ENCODE measurements at regions of chr12 and their contacts with region 1.

Region 1: GRCh38 chr12:452667-453210 is 7.0 kb upstream of the B4GALNT3 start:
- DNase-seq: peak; percentile 71
- CTCF ChIP-seq: peak; percentile 46

Region 2: DNA sequence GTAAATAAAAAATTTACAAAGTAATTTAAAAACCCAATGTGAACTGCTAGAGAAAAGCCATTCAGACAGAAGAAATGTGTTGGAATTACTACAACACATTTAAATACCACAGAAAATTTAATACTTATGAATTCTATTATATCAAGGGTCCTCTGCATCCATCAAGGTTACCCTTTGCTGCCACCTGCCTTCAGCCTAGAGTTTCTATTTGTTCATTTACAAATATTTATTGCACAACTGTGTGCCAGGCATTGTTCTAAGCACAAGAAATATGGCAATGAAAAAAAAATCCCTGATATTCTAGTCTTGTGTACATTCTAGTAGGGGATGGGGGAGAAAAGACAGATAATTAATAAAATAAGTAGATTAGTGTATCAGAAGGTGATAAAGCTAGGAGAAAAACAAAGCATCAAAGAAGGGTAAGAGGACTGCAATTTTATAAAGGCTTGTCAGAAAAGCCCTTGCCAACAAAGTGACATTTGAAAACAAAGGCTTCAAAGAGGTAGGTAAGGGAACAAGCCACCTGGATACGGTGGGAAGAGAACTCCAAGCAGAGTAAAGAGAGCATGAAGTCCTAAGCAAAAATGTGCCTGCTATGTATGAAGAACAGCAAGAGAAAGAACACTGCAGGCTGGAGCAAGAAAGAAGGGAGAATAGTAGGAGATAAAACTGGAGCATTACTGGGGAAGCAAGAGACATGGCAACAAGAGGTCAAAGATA is 131.0 kb before region 1 on chr12:
- CTCF ChIA-PET with region 1: no interaction called
- POLR2A ChIA-PET with region 1: no interaction called
- DNase-seq: no peak
- CTCF ChIP-seq: no peak

Region 3: DNA sequence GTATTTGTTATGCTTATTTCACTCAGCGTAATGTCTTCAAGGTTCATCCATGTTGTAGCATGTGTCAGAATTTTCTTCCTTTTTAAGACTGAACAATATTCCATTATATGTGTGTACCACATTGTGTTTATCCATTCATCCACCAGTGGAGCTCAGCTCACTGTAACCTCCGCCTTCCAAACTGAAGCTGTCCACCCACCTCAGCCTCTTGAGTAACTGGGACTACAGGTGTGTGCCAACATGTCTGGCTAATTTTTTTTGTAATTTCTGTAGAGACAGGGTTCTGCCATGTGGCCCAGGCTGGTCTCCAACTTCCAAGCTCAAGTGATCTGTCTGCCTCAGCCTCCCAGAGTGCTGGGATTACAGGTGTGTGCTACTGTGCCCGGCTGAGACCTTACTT is 30.2 kb before region 1 on chr12:
- CTCF ChIA-PET with region 1: interaction called, 17 read pairs
- POLR2A ChIA-PET with region 1: no interaction called
- DNase-seq: no peak
- CTCF ChIP-seq: no peak

Region 4: GRCh38 chr12:468671-469389 is 16.1 kb after region 1 on chr12:
- CTCF ChIA-PET with region 1: interaction called, 69 read pairs
- POLR2A ChIA-PET with region 1: no interaction called
- DNase-seq: no peak
- CTCF ChIP-seq: no peak

Region 5: GRCh38 chr12:517538-517937 is 64.8 kb after region 1 on chr12:
- CTCF ChIA-PET with region 1: interaction called, 12 read pairs
- POLR2A ChIA-PET with region 1: no interaction called
- DNase-seq: no peak
- CTCF ChIP-seq: no peak

Region 6: DNA sequence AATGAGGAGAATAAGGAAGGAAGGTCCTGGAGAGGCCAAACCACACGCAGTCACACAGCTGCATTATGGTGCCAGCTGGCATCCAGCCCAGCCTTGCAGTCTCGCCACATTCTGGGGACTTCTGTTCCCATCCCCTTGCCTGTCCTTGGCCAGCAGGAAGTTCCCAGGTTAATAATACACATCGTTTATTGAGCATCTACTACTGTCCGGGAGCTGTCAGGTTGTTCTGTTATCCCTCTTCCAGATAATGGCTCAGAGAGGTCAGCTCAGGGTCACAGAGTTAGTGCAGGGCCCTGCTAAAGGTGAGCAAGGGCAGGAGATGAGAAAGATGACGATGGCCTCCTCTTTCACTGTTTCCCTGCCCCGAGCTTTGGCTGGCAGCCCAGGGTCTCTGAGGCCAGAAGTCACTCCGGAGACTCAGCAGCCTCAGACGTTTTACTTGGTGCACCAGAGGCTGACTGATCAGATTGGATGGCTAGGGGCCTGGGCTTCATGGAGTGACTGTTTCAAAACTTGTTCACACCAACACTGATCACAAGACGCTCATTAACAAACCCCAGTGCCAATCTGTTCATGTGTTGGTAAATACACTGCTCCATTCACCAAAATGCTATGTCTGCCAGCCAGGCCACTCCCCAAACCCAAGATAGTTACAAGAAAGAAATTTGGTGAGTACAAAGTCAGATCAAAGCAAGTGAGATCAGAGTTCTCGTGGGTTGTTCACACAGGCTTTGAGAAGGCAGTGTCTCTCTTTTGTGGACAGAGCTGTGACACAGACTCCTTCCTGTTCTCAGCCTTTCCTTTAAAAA is 86.2 kb after region 1 on chr12:
- CTCF ChIA-PET with region 1: interaction called, 132 read pairs
- POLR2A ChIA-PET with region 1: no interaction called
- DNase-seq: no peak
- CTCF ChIP-seq: no peak

Region 7: DNA sequence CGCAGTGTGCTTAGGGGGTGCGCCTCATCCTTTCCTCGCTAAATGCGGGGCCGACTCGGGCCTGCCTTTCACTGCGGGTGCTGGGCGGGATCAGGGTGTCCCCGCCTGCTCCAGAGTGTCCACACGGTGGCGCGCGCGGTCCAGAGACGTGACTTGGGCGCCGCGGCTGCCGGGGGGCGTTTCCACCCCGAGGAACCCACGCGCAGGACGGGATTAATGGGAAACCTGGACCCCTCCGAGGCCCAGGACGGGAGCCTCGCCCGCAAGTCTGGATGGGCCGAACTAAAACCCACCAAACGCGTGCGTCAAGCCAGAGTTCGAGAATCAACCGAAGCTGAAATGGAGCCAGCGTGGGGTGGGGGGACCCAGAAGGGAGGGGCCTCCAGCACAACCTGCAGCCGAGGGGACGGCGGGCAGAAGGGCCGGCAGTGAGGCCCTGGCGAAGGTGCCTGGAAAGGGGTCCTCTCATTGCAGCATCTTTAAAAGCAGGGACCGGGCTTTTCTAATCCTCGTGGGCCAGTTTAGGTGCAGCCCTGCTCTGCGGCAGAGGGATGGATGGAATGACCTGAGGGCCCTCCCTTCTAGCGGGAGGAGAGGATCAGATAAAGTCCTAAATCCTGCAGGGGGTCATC is 117.2 kb after region 1 on chr12:
- CTCF ChIA-PET with region 1: interaction called, 12 read pairs
- POLR2A ChIA-PET with region 1: no interaction called
- DNase-seq: peak; percentile 94
- CTCF ChIP-seq: peak; percentile 95